ENCODE measurements at regions of chr17 and their contacts with region 1.

Region 1: DNA sequence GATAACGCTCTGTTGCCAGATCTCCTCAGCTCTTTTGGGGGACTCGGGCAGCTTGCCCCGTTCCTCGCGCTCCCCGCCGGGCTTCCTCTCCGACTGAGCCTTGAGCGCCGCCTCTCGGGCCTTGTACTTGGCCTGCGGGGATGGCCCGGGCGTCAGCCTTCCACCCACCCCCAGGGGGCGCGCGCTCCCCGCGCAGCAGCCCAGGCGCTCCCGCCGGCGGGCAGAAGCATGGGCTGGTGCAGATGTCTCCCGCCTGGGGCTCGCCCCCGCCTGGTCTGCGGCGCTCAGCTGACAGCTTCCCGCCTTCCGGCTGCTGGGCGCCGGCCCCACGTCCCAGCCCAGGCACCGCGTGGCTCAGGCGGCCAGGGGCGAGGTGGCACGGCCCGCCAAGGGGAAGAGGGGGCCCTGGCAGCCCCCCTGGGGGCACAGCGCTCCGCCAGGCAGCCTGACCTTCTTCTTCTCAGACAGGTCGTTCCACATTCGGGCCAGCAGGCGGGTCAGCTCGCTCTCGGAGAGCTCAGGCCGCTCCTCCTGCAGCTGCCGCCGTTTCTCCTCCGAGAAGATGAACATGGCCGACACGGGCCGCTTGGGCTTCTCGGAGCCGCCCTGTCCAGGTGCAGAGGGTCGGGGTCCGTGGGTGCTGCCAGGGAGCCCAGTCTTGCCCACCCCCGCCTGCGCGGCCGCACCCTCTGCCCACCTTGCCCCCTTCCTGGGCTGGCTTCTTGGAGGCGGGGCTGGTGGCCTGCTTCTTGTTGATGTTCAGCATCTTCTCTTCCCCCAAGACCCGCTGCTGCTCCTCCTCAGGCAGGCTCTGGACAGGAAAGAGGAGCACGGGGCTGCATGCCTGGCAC is 8.9 kb downstream of the UBTF start:
- DNase-seq: peak; percentile 79 to 96 (median 90)
- ATAC-seq: peak; percentile 89 to 96 (median 94)
- H3K4me3 ChIP-seq: no peak overlapping the region
- H3K27ac ChIP-seq: peak overlapping the region in 1 of 4 donors; percentile 3
- H3K4me1 ChIP-seq: peaks cover 0 to 8% (median 0%) of the 10 kb centered on the region in 3 donors
- H3K27me3 ChIP-seq: no peaks in the 10 kb centered on the region
- CTCF ChIP-seq: peak; percentile 94 to 99 (median 98)

Region 2: GRCh38 chr17:44324571-44325275 is 114.2 kb after region 1 on chr17 and contains the start of gene SLC25A39:
- intact Hi-C with region 1: loop called in 2 of 3 experiments (anchors 5 to 10 kb)
- DNase-seq: peak; percentile 89 to 99 (median 97)
- ATAC-seq: peak; percentile 86 to 91 (median 86)
- H3K4me3 ChIP-seq: peak within 1 kb of the TSS; percentile 76 to 100 (median 89)
- H3K27ac ChIP-seq: peak within 1 kb of the TSS; percentile 84 to 96 (median 88)
- H3K4me1 ChIP-seq: peaks cover 0 to 8% (median 6%) of the 10 kb centered on the region in 3 donors
- H3K27me3 ChIP-seq: no peaks in the 10 kb centered on the region
- CTCF ChIP-seq: no peak
- total RNA-seq, gene SLC25A39: 50.7 to 72.7 (median 62.2) TPM

Region 3: GRCh38 chr17:44331249-44331760 is 120.7 kb after region 1 on chr17:
- intact Hi-C with region 1: loop called in 2 of 3 experiments (anchors 5 to 10 kb)
- DNase-seq: peak in 4 of 6 donors; percentile 58 to 82 (median 62)
- ATAC-seq: peak; percentile 19 to 62 (median 56)
- H3K4me3 ChIP-seq: no peak overlapping the region
- H3K27ac ChIP-seq: no peak overlapping the region
- H3K4me1 ChIP-seq: peaks cover 0 to 3% (median 1%) of the 10 kb centered on the region in 3 donors
- H3K27me3 ChIP-seq: no peaks in the 10 kb centered on the region
- CTCF ChIP-seq: peak; percentile 69 to 86 (median 82)

Region 4: DNA sequence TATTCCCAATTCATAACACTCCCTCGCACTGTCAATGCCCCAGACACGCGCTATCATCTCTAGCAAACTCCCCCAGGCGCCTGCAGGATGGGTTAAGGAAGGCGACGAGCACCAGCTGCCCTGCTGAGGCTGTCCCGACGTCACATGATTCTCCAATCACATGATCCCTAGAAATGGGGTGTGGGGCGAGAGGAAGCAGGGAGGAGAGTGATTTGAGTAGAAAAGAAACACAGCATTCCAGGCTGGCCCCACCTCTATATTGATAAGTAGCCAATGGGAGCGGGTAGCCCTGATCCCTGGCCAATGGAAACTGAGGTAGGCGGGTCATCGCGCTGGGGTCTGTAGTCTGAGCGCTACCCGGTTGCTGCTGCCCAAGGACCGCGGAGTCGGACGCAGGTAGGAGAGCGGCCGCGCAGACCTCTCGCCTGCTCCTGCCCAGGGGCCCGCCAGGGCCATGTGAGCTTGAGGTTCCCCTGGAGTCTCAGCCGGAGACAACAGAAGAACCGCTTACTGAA is 134.4 kb after region 1 on chr17 and contains the start of gene GRN:
- intact Hi-C with region 1: loop called in 1 of 3 experiments (anchors 5 kb)
- DNase-seq: peak; percentile 87 to 96 (median 96)
- ATAC-seq: peak; percentile 97 to 99 (median 98)
- H3K4me3 ChIP-seq: peak within 1 kb of the TSS; percentile 77 to 90 (median 86)
- H3K27ac ChIP-seq: peak within 1 kb of the TSS; percentile 64 to 87 (median 81)
- H3K4me1 ChIP-seq: peaks cover 0 to 9% (median 0%) of the 10 kb centered on the region in 3 donors
- H3K27me3 ChIP-seq: no peaks in the 10 kb centered on the region
- CTCF ChIP-seq: no peak
- total RNA-seq, gene GRN: 48.0 to 229 (median 69.6) TPM